ENCODE measurements at regions of chr1 and their contacts with region 1.

Region 1: GRCh38 chr1:184163674-184164465 is 112.3 kb downstream of the TSEN15 start:
- DNase-seq: no peak
- H3K4me3 Mint-ChIP-seq: no peak overlapping the region
- H3K27ac Mint-ChIP-seq: peak overlapping the region; percentile 7
- H3K4me1 Mint-ChIP-seq: peaks cover 21% of the 10 kb centered on the region
- H3K27me3 Mint-ChIP-seq: peaks cover under 1% of the 10 kb centered on the region

Region 2: GRCh38 chr1:183635606-183636333 is 528.1 kb before region 1 on chr1 and contains the start of gene ARPC5:
- intact Hi-C with region 1: loop called (anchors 2 kb)
- DNase-seq: peak; percentile 96
- H3K4me3 Mint-ChIP-seq: peak within 1 kb of the TSS; percentile 100
- H3K27ac Mint-ChIP-seq: peak within 1 kb of the TSS; percentile 100
- H3K4me1 Mint-ChIP-seq: peaks cover 34% of the 10 kb centered on the region
- H3K27me3 Mint-ChIP-seq: peaks cover 11% of the 10 kb centered on the region
- total RNA-seq, gene ARPC5: 160 and 169 TPM in 2 replicates

Region 3: DNA sequence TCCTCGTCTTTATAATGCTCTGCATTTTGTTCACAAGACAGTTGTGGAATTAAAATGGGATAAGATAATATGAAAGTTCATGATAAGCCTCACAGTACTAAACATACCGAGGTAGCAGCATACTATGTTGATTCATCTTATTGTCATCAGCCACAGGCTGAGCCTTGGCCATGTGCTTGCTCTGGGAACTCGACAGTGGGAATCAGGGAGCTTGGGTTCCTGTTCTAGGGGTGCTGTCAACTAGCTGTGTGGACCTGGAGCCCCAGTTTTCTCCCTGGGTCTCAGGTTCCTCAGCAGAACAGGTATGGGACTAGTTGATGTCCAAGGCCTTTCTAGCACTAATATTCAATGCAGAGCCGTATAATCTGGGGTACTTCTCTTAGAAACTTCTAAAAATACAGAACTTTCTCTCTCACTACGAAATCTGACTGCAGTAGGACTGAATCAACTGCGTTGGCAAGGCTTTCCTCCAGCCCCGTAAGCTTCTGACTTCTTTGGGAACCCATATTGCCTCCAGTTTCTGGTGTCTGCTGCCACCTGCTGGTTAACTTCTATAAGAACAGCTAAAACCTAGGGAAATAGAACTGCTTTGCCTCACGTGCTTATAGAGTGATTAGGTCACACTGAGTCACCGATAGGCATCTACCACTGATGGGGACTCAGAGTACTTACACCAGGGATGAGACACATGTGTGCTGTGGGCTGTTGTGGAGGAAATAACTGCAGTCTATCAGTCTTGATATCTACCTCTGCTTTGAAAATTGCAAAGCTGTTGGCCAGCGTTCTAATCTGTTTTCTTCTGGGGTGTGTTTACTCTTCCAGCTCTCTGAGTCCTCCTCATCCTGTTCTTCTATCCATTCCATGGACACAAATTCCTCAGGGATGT is 248.0 kb before region 1 on chr1:
- intact Hi-C with region 1: loop called (anchors 2 kb)
- DNase-seq: peak; percentile 72
- H3K4me3 Mint-ChIP-seq: no peak overlapping the region
- H3K27ac Mint-ChIP-seq: peak overlapping the region; percentile 21
- H3K4me1 Mint-ChIP-seq: peaks cover 32% of the 10 kb centered on the region
- H3K27me3 Mint-ChIP-seq: no peaks in the 10 kb centered on the region

Region 4: DNA sequence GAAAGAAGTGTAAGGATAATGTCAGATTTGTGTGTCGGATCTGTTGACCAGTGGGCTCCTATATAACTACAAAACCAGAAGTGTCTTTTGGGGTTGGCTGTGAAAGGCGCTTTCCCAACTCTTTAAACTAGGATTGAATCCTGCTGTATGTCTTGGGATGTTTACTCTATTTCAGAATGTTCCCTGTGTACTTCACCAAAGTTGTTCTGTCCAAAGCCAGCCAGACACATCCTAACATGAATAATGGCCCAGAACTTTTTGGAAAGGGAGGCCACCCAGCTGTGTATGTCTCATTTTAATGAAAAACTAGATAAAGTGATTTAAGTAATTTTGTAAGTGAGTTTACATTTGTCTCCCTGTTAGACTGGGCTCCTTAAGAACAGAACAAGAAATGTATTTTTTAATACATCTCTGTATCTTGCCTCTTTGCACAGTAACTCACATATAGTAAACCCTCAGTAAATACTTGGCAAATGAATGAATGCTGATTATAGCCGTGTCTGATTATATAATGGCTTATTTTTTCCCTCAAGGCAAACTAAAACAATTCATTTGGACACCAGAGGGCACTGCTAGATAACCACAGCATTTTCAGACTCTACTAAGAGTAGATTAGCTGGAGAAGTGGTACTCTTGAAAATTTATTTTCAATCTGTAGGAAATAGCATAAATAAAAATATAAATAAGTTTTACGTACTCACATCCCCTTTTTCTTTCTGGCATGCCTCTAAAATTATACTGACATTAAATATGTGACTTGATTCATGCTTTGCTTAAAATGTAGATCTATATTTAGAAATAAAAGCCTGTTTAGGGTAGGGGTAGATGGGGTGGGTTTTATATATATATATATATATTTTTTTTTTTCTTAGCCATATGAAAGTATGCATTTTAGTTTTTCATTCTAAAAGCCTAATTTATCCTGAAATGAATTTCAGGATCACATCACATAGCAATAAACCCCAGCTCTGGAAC is 88.5 kb before region 1 on chr1:
- intact Hi-C with region 1: loop called (anchors 2 kb)
- DNase-seq: no peak
- H3K4me3 Mint-ChIP-seq: no peak overlapping the region
- H3K27ac Mint-ChIP-seq: no peak overlapping the region
- H3K4me1 Mint-ChIP-seq: peaks cover 14% of the 10 kb centered on the region
- H3K27me3 Mint-ChIP-seq: no peaks in the 10 kb centered on the region

Region 5: DNA sequence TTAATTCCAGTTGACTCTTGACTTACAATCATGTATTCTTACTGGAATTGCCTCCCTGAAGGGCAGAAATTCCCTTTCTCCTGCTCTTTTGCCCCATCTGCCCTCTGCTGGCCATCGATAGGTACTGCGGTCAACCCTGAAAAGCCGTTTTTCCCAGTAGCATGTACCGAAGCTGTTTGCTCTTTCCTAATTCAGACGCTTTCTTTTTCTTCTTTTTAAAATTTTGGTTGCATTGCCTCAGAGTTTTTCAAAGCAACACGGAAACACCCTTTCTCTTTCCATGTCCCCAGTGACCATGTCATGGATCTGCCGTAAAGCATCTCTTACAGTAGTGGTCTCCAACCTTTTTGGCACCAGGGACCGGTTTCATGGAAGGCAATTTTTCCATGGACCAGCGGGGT is 58.8 kb after region 1 on chr1:
- intact Hi-C with region 1: loop called (anchors 2 kb)
- DNase-seq: peak; percentile 9
- H3K4me3 Mint-ChIP-seq: no peak overlapping the region
- H3K27ac Mint-ChIP-seq: no peak overlapping the region
- H3K4me1 Mint-ChIP-seq: no peaks in the 10 kb centered on the region
- H3K27me3 Mint-ChIP-seq: peaks cover 8% of the 10 kb centered on the region

Region 6: GRCh38 chr1:184754476-184755225 is 590.8 kb after region 1 on chr1 and contains the start of gene EDEM3:
- intact Hi-C with region 1: loop called (anchors 2 kb)
- DNase-seq: peak; percentile 98
- H3K4me3 Mint-ChIP-seq: peak within 1 kb of the TSS; percentile 87
- H3K27ac Mint-ChIP-seq: peak within 1 kb of the TSS; percentile 79
- H3K4me1 Mint-ChIP-seq: peaks cover 41% of the 10 kb centered on the region
- H3K27me3 Mint-ChIP-seq: peaks cover 19% of the 10 kb centered on the region
- total RNA-seq, gene EDEM3: 25.3 and 30.2 TPM in 2 replicates

Region 7: GRCh38 chr1:184973272-184974055 is 809.6 kb after region 1 on chr1:
- intact Hi-C with region 1: loop called (anchors 5 kb)
- DNase-seq: no peak
- H3K4me3 Mint-ChIP-seq: peak overlapping the region; percentile 90
- H3K27ac Mint-ChIP-seq: peak overlapping the region; percentile 96
- H3K4me1 Mint-ChIP-seq: peaks cover 57% of the 10 kb centered on the region
- H3K27me3 Mint-ChIP-seq: peaks cover 13% of the 10 kb centered on the region

Measured in activated T-helper 2 cell treated with anti-CD3 and anti-CD28 coated beads, Interferon-gamma antibody, Interleukin-2, Interleukin-4, amounts not matched to agents 10 μg/mL and 5 μg/mL and 100 μg/mL, durations not matched to agents 14 hours and 24 hours and 36 hours (primary cell).